B cell (primary cell): ENCODE measurements at regions of chr5 and their contacts with region 1.

Region 1: DNA sequence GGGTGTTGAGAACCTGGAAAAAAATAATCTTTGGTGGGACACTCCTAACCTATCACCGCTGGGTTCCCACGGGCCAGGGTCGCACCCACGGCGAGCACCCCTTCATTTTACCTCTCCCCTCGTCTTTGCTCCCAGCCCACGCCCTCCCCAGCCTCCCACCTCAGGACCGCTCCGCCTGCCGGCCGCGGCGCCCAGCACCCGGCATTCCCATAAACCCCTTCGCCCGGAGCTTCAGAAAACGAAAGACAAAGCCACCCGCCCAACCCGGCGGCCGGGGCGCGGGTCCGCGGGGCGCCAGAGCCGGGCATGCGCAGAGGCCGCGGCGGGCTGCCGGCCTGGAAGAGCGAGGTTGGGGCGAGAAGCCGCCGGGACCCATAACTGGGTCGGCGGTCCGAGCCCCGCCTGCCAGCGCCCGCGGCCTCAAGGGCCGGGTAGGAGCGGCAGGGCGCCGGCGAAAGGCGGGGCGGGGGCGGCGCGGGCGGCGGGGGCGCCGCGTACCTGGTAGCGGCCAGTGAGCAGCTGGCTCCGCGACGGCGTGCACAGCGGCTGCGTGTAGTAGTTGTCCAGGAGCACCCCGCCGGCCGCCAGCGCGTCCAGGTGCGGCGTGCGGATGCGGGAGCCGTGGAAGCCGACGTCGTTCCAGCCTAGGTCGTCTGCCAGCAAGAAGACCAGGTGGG is 533 bp downstream of the ARSB start:
- DNase-seq: peak; percentile 90
- ATAC-seq: peak; percentile 60
- H3K4me3 ChIP-seq: peak overlapping the region; percentile 44 to 85 (median 84)
- H3K4me3 Mint-ChIP-seq: peak overlapping the region; percentile 89
- H3K27ac ChIP-seq: peak overlapping the region; percentile 67 to 89
- H3K27ac Mint-ChIP-seq: peak overlapping the region; percentile 92
- H3K4me1 ChIP-seq: peaks cover 18 to 24% of the 10 kb centered on the region in 2 donors
- H3K4me1 Mint-ChIP-seq: peaks cover 43% of the 10 kb centered on the region
- H3K27me3 ChIP-seq: no peaks in the 10 kb centered on the region
- H3K27me3 Mint-ChIP-seq: no peaks in the 10 kb centered on the region
- CTCF ChIP-seq: no peak

Region 2: DNA sequence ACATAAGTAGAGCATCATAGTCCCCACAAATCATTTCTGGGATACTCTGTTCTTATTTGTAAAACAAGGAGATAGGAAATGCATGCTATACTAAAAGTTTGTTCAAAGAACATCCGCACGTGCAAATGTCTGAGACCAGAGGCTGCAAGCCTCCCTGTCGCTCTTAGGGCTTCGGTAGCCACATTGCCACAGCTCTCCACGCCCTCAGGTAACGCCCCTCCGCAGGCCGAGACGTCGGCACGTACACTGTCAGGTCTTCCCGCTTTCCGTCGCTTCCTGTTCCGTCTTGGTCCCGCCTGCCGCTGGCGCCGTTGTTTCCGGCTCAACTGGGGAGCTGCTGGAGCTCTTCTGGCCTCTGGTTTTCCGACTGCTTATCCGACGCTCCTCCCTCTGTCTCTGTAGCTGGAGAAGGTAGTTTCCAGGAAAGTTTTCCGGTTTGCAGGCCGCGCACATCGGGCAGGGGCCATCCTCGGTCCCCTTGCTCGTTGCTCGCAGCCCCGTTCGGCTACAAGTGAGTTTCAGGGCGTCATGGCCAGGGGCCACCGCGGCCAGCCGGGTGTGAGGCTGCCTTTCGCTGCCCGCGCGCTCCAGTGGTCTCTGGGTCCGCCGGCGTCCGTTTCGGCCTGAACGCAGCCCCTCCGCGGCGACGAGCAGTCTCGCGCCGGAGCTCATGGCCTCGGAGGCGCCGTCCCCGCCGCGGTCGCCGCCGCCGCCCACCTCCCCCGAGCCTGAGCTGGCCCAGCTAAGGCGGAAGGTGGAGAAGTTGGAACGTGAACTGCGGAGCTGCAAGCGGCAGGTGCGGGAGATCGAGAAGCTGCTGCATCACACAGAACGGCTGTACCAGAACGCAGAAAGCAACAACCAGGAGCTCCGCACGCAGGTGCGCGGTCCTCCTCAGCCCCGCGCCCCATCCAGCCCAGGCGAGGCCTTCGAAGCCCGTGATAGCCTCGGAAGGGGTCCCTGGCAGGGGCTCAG is 1954.2 kb before region 1 on chr5 and contains the start of gene AGGF1:
- CTCF ChIA-PET with region 1: no interaction called
- POLR2A ChIA-PET with region 1: no interaction called
- intact Hi-C with region 1: loop called (anchors 10 kb)
- DNase-seq: peak; percentile 89
- ATAC-seq: peak; percentile 98
- H3K4me3 ChIP-seq: peak within 1 kb of the TSS; percentile 71 to 99 (median 94)
- H3K4me3 Mint-ChIP-seq: peak within 1 kb of the TSS; percentile 96
- H3K27ac ChIP-seq: peak within 1 kb of the TSS; percentile 65 to 84
- H3K27ac Mint-ChIP-seq: peak within 1 kb of the TSS; percentile 90
- H3K4me1 ChIP-seq: peaks cover 16 to 19% of the 10 kb centered on the region in 2 donors
- H3K4me1 Mint-ChIP-seq: peaks cover 31% of the 10 kb centered on the region
- H3K27me3 ChIP-seq: no peaks in the 10 kb centered on the region
- H3K27me3 Mint-ChIP-seq: peaks cover 7% of the 10 kb centered on the region
- CTCF ChIP-seq: no peak
- total RNA-seq, gene AGGF1: 25.6 and 26.2 TPM in 2 replicates

Region 3: DNA sequence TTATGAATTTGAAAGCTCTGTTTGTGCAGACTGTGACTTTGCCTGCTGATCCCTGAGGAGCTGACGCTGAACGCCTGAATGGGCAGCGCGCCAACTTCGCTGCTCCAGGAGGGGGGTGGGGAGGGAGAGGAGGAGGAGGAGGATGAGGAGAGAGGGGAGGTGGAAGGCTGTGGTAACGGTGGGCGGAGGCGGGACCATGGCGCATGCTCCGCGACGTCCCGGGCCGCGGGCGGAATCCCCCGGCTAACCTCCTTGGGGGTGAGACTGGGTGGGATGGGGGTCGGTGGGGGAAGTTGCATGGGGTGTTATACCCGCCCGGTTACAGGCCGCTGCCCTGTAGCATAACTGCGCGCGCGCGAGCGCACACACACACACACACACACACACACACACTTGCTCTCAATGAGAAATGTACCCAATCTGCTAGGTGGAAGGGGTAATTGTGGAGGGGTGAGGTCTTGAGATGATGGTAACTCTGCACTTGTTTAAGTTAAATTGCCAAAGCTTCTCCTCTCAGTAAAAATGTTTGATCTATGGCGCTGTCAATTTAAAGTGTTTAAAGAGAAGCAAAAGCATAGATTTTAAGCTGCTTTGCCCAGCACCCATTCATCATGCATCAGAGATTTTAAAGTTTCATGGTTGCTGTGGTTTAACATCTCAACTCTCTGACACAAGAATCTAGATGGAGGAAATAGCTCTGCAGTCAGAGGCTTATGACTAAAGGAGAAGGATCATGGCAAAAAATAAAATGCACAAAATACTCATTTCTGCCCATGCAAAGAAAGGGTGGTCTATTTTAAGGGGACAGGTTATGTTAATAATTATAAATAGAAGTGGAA is 1131.8 kb before region 1 on chr5:
- CTCF ChIA-PET with region 1: no interaction called
- POLR2A ChIA-PET with region 1: no interaction called
- intact Hi-C with region 1: loop called (anchors 2 kb)
- DNase-seq: peak; percentile 83
- ATAC-seq: peak; percentile 80
- H3K4me3 ChIP-seq: peak overlapping the region; percentile 57 to 82 (median 65)
- H3K4me3 Mint-ChIP-seq: peak overlapping the region; percentile 77
- H3K27ac ChIP-seq: peak overlapping the region; percentile 21 to 32
- H3K27ac Mint-ChIP-seq: peak overlapping the region; percentile 46
- H3K4me1 ChIP-seq: peaks cover 9 to 20% of the 10 kb centered on the region in 2 donors
- H3K4me1 Mint-ChIP-seq: peaks cover 20% of the 10 kb centered on the region
- H3K27me3 ChIP-seq: peaks cover 0 to 3% (median 0%) of the 10 kb centered on the region in 4 experiments
- H3K27me3 Mint-ChIP-seq: peaks cover 9% of the 10 kb centered on the region
- CTCF ChIP-seq: no peak

Region 4: GRCh38 chr5:78359831-78360673 is 624.5 kb before region 1 on chr5 and contains the start of gene SCAMP1:
- CTCF ChIA-PET with region 1: interaction called, 6 read pairs
- POLR2A ChIA-PET with region 1: interaction called, 5 read pairs
- intact Hi-C with region 1: loop called (anchors 2 kb)
- DNase-seq: peak; percentile 97
- ATAC-seq: peak; percentile 87
- H3K4me3 ChIP-seq: peak within 1 kb of the TSS; percentile 67 to 99 (median 88)
- H3K4me3 Mint-ChIP-seq: peak within 1 kb of the TSS; percentile 93
- H3K27ac ChIP-seq: peak within 1 kb of the TSS; percentile 81 to 85
- H3K27ac Mint-ChIP-seq: peak within 1 kb of the TSS; percentile 90
- H3K4me1 ChIP-seq: peaks cover 20 to 22% of the 10 kb centered on the region in 2 donors
- H3K4me1 Mint-ChIP-seq: peaks cover 37% of the 10 kb centered on the region
- H3K27me3 ChIP-seq: no peaks in the 10 kb centered on the region
- H3K27me3 Mint-ChIP-seq: no peaks in the 10 kb centered on the region
- CTCF ChIP-seq: peak; percentile 18
- total RNA-seq, gene SCAMP1: 18.4 and 25.4 TPM in 2 replicates

Region 5: DNA sequence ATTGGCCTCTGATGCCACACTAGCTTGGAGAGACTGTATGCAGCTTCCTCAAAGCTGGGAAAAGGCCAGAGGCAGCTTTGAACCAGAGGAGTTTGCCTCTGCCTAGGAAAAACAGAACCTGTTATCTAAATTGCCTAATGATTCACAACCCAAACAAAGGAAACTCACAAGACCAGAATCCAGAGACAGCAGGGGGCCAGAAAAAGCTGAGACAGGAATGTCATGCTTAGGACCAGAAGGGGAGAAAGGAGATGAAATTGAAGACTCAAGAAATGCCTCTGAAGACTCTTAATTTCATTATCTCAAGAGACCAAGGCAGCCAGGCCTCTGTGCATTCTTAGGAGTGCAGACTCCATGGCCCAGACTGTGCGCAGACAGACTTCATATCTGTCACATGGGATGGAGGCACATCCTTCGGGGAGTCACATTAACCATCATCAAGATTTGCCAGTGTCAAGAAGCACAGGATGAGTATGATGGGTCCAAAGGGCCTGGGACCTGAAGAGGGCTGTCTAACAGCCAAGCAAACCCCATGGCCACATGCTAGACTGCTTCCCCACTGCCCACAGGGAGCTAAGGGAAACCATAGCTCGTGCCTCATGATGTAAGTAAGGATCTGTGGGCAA is 56.8 kb before region 1 on chr5:
- CTCF ChIA-PET with region 1: no interaction called
- POLR2A ChIA-PET with region 1: no interaction called
- intact Hi-C with region 1: no loop called
- DNase-seq: no peak
- ATAC-seq: no peak
- H3K4me3 ChIP-seq: no peak overlapping the region
- H3K4me3 Mint-ChIP-seq: no peak overlapping the region
- H3K27ac ChIP-seq: no peak overlapping the region
- H3K27ac Mint-ChIP-seq: no peak overlapping the region
- H3K4me1 ChIP-seq: no peaks in the 10 kb centered on the region
- H3K4me1 Mint-ChIP-seq: no peaks in the 10 kb centered on the region
- H3K27me3 ChIP-seq: no peaks in the 10 kb centered on the region
- H3K27me3 Mint-ChIP-seq: no peaks in the 10 kb centered on the region
- CTCF ChIP-seq: no peak

Region 6: DNA sequence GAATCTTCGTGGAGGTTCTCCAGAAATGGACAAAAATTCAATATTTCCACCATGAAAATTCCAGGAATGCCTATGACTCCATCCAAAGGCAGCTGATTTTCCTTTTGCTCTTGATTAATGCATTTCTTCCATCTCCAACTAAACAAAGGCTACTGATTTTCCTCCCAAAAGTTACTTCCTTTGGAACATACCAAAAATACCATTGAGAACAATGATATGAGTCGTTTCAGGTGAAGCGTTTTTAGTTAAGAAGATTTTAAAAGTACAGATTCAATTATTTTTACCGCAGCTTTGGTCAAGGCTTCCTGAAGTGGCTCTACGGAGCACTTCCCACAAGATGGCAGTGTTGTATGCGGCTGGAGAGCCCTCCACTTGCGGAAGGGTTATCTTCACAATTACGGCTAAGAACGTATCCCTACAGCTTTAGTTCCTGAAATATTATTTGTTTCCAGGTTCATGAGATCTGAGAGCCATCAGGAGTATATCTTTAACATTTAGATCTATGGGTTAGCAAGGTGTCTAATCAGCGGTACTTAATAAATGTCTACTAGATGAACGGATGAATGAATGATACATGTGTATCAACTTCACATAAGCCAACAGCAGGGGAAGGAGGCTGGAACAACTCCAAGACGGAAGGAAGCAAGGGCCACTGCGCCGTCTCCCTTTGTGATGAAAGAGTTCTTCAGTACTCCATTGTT is 36.4 kb after region 1 on chr5:
- CTCF ChIA-PET with region 1: interaction called, 41 read pairs
- POLR2A ChIA-PET with region 1: no interaction called
- intact Hi-C with region 1: loop called (anchors 2 kb)
- DNase-seq: peak; percentile 58
- ATAC-seq: peak; percentile 28
- H3K4me3 ChIP-seq: no peak overlapping the region
- H3K4me3 Mint-ChIP-seq: peak overlapping the region; percentile 14
- H3K27ac ChIP-seq: no peak overlapping the region
- H3K27ac Mint-ChIP-seq: no peak overlapping the region
- H3K4me1 ChIP-seq: peaks cover 6 to 12% of the 10 kb centered on the region in 2 donors
- H3K4me1 Mint-ChIP-seq: peaks cover 8% of the 10 kb centered on the region
- H3K27me3 ChIP-seq: peaks cover 0 to 12% (median 10%) of the 10 kb centered on the region in 4 experiments
- H3K27me3 Mint-ChIP-seq: peaks cover 56% of the 10 kb centered on the region
- CTCF ChIP-seq: peak; percentile 78

Region 7: DNA sequence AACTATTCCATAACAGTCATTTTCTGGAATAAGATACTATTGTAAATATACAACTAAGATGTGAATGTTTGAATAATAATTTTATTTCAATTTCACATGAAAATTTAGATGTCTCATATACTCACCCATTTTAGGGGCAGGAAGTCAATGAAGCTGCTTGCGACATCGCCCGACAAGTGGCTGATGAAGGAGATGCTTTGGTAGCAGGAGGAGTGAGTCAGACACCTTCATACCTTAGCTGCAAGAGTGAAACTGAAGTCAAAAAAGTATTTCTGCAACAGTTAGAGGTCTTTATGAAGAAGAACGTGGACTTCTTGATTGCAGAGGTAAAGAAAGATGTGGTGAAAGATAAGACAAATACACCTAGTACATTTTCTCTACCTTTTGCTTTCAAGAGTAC is 135.6 kb after region 1 on chr5:
- CTCF ChIA-PET with region 1: no interaction called
- POLR2A ChIA-PET with region 1: no interaction called
- intact Hi-C with region 1: no loop called
- DNase-seq: no peak
- ATAC-seq: no peak
- H3K4me3 ChIP-seq: no peak overlapping the region
- H3K4me3 Mint-ChIP-seq: no peak overlapping the region
- H3K27ac ChIP-seq: no peak overlapping the region
- H3K27ac Mint-ChIP-seq: no peak overlapping the region
- H3K4me1 ChIP-seq: no peaks in the 10 kb centered on the region
- H3K4me1 Mint-ChIP-seq: no peaks in the 10 kb centered on the region
- H3K27me3 ChIP-seq: no peaks in the 10 kb centered on the region
- H3K27me3 Mint-ChIP-seq: peaks cover 25% of the 10 kb centered on the region
- CTCF ChIP-seq: no peak

Region 8: DNA sequence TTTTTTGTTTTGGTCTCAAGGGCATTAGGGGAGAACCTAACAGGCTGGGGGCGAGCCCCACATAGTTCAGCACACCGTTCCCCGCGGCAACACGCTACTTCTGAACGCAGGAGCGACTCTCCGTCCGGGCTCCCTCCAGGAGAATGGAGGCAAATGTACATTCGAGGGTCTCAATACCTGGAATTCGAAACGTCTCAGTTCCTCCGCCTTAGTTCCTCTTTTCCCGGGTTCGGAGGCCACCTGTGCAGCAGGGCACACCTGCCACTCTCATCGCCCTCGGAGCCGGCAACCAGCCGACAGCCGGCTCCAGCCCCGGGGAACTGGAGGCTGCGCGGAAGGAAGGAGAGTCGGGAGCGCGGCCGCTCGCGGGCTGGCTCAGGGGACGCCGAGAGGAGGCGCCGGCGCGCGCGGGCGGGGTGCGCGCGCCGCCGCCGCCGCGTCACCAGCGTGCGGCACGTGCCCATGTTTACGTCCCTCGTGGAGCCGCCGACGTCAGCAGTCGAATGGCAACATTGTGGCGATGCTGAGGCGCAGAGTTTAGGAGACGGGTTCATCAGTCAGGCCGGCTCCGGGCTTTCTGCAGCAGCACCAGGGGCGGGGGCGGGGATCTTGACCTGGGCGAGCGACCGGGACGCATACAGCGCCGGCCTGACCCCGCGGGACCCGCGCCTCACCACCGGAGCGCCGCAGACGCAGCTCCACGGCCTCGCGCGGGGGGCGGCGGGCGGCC is 251.2 kb after region 1 on chr5 and contains the start of gene JMY:
- CTCF ChIA-PET with region 1: interaction called, 4 read pairs
- POLR2A ChIA-PET with region 1: interaction called, 5 read pairs
- intact Hi-C with region 1: loop called (anchors 2 kb)
- DNase-seq: peak; percentile 92
- ATAC-seq: peak; percentile 77
- H3K4me3 ChIP-seq: peak within 1 kb of the TSS; percentile 69 to 84 (median 77)
- H3K4me3 Mint-ChIP-seq: peak within 1 kb of the TSS; percentile 96
- H3K27ac ChIP-seq: peak within 1 kb of the TSS; percentile 86 to 87
- H3K27ac Mint-ChIP-seq: peak within 1 kb of the TSS; percentile 89
- H3K4me1 ChIP-seq: peaks cover 19 to 33% of the 10 kb centered on the region in 2 donors
- H3K4me1 Mint-ChIP-seq: peaks cover 30% of the 10 kb centered on the region
- H3K27me3 ChIP-seq: no peaks in the 10 kb centered on the region
- H3K27me3 Mint-ChIP-seq: no peaks in the 10 kb centered on the region
- CTCF ChIP-seq: no peak
- total RNA-seq, gene JMY: 20.4 and 20.5 TPM in 2 replicates

Region 9: GRCh38 chr5:79990598-79991507 is 1006.3 kb after region 1 on chr5 and contains the start of gene MTX3:
- CTCF ChIA-PET with region 1: no interaction called
- POLR2A ChIA-PET with region 1: no interaction called
- intact Hi-C with region 1: loop called (anchors 5 kb)
- DNase-seq: peak; percentile 89
- ATAC-seq: peak; percentile 96
- H3K4me3 ChIP-seq: peak within 1 kb of the TSS; percentile 71 to 90 (median 78)
- H3K4me3 Mint-ChIP-seq: peak within 1 kb of the TSS; percentile 81
- H3K27ac ChIP-seq: peak within 1 kb of the TSS; percentile 65 to 70
- H3K27ac Mint-ChIP-seq: peak within 1 kb of the TSS; percentile 91
- H3K4me1 ChIP-seq: peaks cover 16% of the 10 kb centered on the region in 2 donors
- H3K4me1 Mint-ChIP-seq: peaks cover 17% of the 10 kb centered on the region
- H3K27me3 ChIP-seq: no peaks in the 10 kb centered on the region
- H3K27me3 Mint-ChIP-seq: peaks cover 9% of the 10 kb centered on the region
- CTCF ChIP-seq: no peak
- total RNA-seq, gene MTX3: 21.0 and 22.0 TPM in 2 replicates